Activated CD8-positive, alpha-beta T cell treated with anti-CD3 and anti-CD28 coated beads, Interleukin-2, amount 10 ng/mL, durations not matched to agents 7 days and 5 days (primary cell): ENCODE measurements at regions of chr20 and their contacts with region 1.

Region 1: GRCh38 chr20:2470423-2471193 is at the start of gene SNRPB:
- DNase-seq: peak; percentile 98
- ATAC-seq: peak; percentile 93
- H3K4me3 Mint-ChIP-seq: peak within 1 kb of the TSS; percentile 98
- H3K27ac Mint-ChIP-seq: peak within 1 kb of the TSS; percentile 100
- H3K4me1 Mint-ChIP-seq: peaks cover 52% of the 10 kb centered on the region
- H3K27me3 Mint-ChIP-seq: no peaks in the 10 kb centered on the region
- total RNA-seq, gene SNRPB: 338 to 339 TPM

Region 2: GRCh38 chr20:2402271-2402980 is 68.2 kb before region 1 on chr20:
- CTCF ChIA-PET with region 1: no interaction called
- POLR2A ChIA-PET with region 1: no interaction called
- DNase-seq: no peak
- ATAC-seq: no peak
- H3K4me3 Mint-ChIP-seq: no peak overlapping the region
- H3K27ac Mint-ChIP-seq: no peak overlapping the region
- H3K4me1 Mint-ChIP-seq: no peaks in the 10 kb centered on the region
- H3K27me3 Mint-ChIP-seq: no peaks in the 10 kb centered on the region

Region 3: GRCh38 chr20:2451939-2452732 is 18.5 kb before region 1 on chr20:
- CTCF ChIA-PET with region 1: interaction called, 14 read pairs
- POLR2A ChIA-PET with region 1: interaction called, 6 read pairs
- DNase-seq: peak; percentile 81
- ATAC-seq: peak; percentile 55
- H3K4me3 Mint-ChIP-seq: no peak overlapping the region
- H3K27ac Mint-ChIP-seq: no peak overlapping the region
- H3K4me1 Mint-ChIP-seq: peaks cover 3% of the 10 kb centered on the region
- H3K27me3 Mint-ChIP-seq: peaks cover 8% of the 10 kb centered on the region

Region 4: GRCh38 chr20:2508631-2509467 is 38.2 kb after region 1 on chr20 and contains the start of gene ZNF343:
- CTCF ChIA-PET with region 1: interaction called, 4 read pairs
- POLR2A ChIA-PET with region 1: interaction called, 18 read pairs
- DNase-seq: peak; percentile 88
- ATAC-seq: peak; percentile 94
- H3K4me3 Mint-ChIP-seq: peak within 1 kb of the TSS; percentile 99
- H3K27ac Mint-ChIP-seq: peak within 1 kb of the TSS; percentile 93
- H3K4me1 Mint-ChIP-seq: peaks cover 11% of the 10 kb centered on the region
- H3K27me3 Mint-ChIP-seq: peaks cover 17% of the 10 kb centered on the region
- total RNA-seq, gene ZNF343: 8.7 to 9.0 TPM

Region 5: GRCh38 chr20:2651772-2652723 is 181.4 kb after region 1 on chr20 and contains the start of gene NOP56:
- CTCF ChIA-PET with region 1: no interaction called
- POLR2A ChIA-PET with region 1: interaction called, 29 read pairs
- DNase-seq: peak; percentile 94
- ATAC-seq: peak; percentile 89
- H3K4me3 Mint-ChIP-seq: peak within 1 kb of the TSS; percentile 88
- H3K27ac Mint-ChIP-seq: peak within 1 kb of the TSS; percentile 89
- H3K4me1 Mint-ChIP-seq: peaks cover 50% of the 10 kb centered on the region
- H3K27me3 Mint-ChIP-seq: no peaks in the 10 kb centered on the region
- total RNA-seq, gene NOP56: 441 to 450 TPM

Region 6: DNA sequence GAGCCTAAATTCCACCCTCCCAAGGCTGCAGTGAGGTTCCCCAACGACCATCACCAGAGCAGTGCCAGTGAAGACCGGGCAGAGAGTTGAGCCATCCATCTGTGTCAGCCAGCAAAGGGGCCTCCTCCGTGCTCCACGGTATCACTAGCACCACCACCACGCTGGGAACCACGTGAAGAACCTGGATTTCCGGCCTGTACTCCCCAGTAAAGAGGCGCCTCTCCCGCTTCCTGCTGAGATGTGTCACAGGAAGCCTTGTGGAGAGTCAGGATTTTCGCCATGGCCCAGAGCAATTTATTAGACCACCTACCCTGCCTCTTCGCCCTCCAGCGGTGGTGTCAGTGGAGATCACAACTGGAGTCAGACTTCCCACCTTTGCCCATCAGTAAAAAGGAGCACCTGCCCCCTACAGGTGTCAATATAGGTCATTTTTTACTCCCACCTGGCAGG is 301.0 kb after region 1 on chr20:
- CTCF ChIA-PET with region 1: no interaction called
- POLR2A ChIA-PET with region 1: no interaction called
- DNase-seq: no peak
- ATAC-seq: no peak
- H3K4me3 Mint-ChIP-seq: no peak overlapping the region
- H3K27ac Mint-ChIP-seq: no peak overlapping the region
- H3K4me1 Mint-ChIP-seq: peaks cover 8% of the 10 kb centered on the region
- H3K27me3 Mint-ChIP-seq: peaks cover 19% of the 10 kb centered on the region